A549 (cell line): ENCODE measurements at regions of chr9 and their contacts with region 1.

Region 1: DNA sequence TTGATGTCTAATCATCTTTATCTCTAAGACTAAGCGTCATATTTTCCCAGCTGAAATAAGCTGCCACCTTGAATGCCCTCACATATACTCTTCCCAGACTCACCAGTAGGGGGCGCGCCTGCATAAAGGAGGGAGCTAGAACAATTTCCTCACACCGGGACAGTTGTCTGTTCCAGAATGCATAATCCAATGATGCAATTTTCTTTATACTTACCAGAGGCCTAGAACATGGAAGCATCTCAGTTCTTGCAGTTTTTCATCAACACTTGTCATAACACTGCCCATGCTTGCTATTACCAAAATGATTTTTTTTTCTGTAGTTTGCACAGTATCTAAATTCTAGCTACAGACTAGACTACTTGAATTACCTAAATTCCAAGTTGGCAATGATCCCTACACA is 203.9 kb downstream of the FRMD3 start:
- DNase-seq: peak; percentile 35 to 75
- ATAC-seq: peak; percentile 89 to 93
- H3K4me3 ChIP-seq: no peak overlapping the region
- H3K27ac ChIP-seq: peak overlapping the region; percentile 51 to 77
- H3K4me1 ChIP-seq: peaks cover 5% of the 10 kb centered on the region; the same call in 2 of the 3 replicates
- CTCF ChIP-seq: peak; percentile 94
- EP300 ChIP-seq: no peak
- POLR2A ChIP-seq: no peak
- RAD21 ChIP-seq: peak; percentile 92 to 96

Region 2: GRCh38 chr9:83355024-83355444 is 20.7 kb after region 1 on chr9:
- CTCF ChIA-PET with region 1: interaction called, 10 read pairs
- POLR2A ChIA-PET with region 1: no interaction called
- DNase-seq: no peak
- ATAC-seq: no peak
- H3K4me3 ChIP-seq: no peak overlapping the region
- H3K27ac ChIP-seq: no peak overlapping the region
- H3K4me1 ChIP-seq: no peaks in the 10 kb centered on the region
- CTCF ChIP-seq: no peak
- EP300 ChIP-seq: no peak
- POLR2A ChIP-seq: no peak
- RAD21 ChIP-seq: no peak

Region 3: DNA sequence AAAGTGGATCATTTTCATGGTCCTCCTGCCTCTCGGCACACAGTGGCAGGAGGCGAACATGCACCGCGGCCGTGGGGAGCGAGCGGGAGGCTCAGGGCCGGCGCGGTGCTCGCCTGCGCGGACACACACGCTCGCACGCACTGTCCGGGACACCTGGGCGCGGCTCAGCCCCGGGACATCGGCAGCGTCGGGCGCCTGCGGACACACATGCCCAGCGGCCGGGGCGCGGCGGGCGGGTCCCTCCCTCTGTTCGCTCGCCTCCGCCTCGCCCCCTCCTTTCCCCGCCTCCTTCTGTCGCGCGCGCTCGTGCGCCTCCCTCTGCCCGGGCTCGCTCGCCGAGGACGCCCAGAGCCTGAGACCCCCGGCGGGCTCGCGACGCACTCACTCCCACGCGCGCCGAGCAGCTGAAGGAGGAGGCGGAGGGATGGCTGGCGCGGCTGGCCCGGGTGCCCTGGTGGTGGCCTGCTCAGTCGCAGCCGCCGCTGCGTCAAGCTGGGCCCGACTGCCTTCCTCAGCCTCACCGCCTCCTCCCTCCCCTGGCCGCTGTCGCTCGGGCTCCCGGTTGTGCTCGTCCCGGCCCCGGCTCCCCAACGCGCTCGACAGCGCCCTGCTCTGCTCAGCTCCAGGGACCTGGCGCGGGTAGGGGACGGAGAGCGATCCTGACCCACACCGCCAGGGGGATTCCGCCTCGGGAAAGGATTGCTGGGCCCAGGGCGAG is 204.0 kb after region 1 on chr9 and contains the start of gene FRMD3:
- CTCF ChIA-PET with region 1: interaction called, 12 read pairs
- POLR2A ChIA-PET with region 1: no interaction called
- DNase-seq: peak; percentile 78 to 82
- ATAC-seq: peak; percentile 96
- H3K4me3 ChIP-seq: peak within 1 kb of the TSS; percentile 83
- H3K27ac ChIP-seq: peak within 1 kb of the TSS; percentile 81 to 85
- H3K4me1 ChIP-seq: peaks cover 5% of the 10 kb centered on the region; the same call in 2 of the 3 replicates
- CTCF ChIP-seq: peak; percentile 60
- EP300 ChIP-seq: no peak
- POLR2A ChIP-seq: peak; percentile 51
- RAD21 ChIP-seq: peak; percentile 48 to 70; a peak in 4 of 5 replicates
- polyA plus RNA-seq, gene FRMD3: 1.7 and 2.2 TPM in 2 replicates